Activated B cell treated with CpG ODN at 0.5 μM for 24 hours (primary cell): ENCODE measurements at regions of chr17 and their contacts with region 1.

Region 1: GRCh38 chr17:82440991-82441627 is 9.4 kb downstream of the CYBC1 start:
- DNase-seq: no peak
- ATAC-seq: no peak
- H3K4me3 Mint-ChIP-seq: peak overlapping the region; percentile 63
- H3K27ac Mint-ChIP-seq: peak overlapping the region; percentile 85
- H3K4me1 Mint-ChIP-seq: peaks cover 48% of the 10 kb centered on the region
- H3K27me3 Mint-ChIP-seq: no peaks in the 10 kb centered on the region
- CTCF ChIP-seq: no peak

Region 2: DNA sequence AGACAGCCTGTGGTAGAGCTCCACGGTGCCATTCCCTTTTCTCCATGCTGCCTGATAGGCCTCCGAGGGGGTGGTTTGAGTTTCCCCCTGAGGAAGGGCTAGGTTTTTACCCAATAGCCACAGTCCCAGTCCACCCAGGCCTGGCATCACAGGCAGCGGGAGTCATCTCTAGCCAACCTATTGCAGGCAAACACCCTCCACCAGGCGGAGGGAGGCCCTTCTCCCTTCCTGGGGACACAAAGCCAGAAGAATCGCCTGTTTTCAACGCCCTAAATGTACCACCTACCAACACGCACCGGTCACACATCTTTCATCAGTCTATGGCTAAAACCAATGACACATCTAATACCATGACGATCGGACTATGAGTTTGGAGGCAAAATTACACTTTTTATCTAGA is 175.0 kb before region 1 on chr17:
- CTCF ChIA-PET with region 1: no interaction called
- POLR2A ChIA-PET with region 1: interaction called, 11 read pairs
- intact Hi-C with region 1: no loop called
- DNase-seq: no peak
- ATAC-seq: no peak
- H3K4me3 Mint-ChIP-seq: no peak overlapping the region
- H3K27ac Mint-ChIP-seq: no peak overlapping the region
- H3K4me1 Mint-ChIP-seq: peaks cover 46% of the 10 kb centered on the region
- H3K27me3 Mint-ChIP-seq: no peaks in the 10 kb centered on the region
- CTCF ChIP-seq: no peak

Region 3: GRCh38 chr17:82528484-82529265 is 87.6 kb after region 1 on chr17:
- CTCF ChIA-PET with region 1: no interaction called
- POLR2A ChIA-PET with region 1: no interaction called
- intact Hi-C with region 1: no loop called
- DNase-seq: no peak
- ATAC-seq: no peak
- H3K4me3 Mint-ChIP-seq: no peak overlapping the region
- H3K27ac Mint-ChIP-seq: no peak overlapping the region
- H3K4me1 Mint-ChIP-seq: peaks cover 50% of the 10 kb centered on the region
- H3K27me3 Mint-ChIP-seq: no peaks in the 10 kb centered on the region
- CTCF ChIP-seq: no peak

Region 4: GRCh38 chr17:82767041-82767754 is 326.1 kb after region 1 on chr17:
- CTCF ChIA-PET with region 1: no interaction called
- POLR2A ChIA-PET with region 1: no interaction called
- intact Hi-C with region 1: no loop called
- DNase-seq: no peak
- ATAC-seq: no peak
- H3K4me3 Mint-ChIP-seq: no peak overlapping the region
- H3K27ac Mint-ChIP-seq: no peak overlapping the region
- H3K4me1 Mint-ChIP-seq: peaks cover 12% of the 10 kb centered on the region
- H3K27me3 Mint-ChIP-seq: no peaks in the 10 kb centered on the region
- CTCF ChIP-seq: no peak